Dendritic cell treated with granulocyte-macrophage colony-stimulating factor and Interleukin-4, amounts not matched to agents 40 ng/mL and 50 ng/mL, for 4 days (primary cell): ENCODE measurements at regions of chr10 and their contacts with region 1.

Region 1: DNA sequence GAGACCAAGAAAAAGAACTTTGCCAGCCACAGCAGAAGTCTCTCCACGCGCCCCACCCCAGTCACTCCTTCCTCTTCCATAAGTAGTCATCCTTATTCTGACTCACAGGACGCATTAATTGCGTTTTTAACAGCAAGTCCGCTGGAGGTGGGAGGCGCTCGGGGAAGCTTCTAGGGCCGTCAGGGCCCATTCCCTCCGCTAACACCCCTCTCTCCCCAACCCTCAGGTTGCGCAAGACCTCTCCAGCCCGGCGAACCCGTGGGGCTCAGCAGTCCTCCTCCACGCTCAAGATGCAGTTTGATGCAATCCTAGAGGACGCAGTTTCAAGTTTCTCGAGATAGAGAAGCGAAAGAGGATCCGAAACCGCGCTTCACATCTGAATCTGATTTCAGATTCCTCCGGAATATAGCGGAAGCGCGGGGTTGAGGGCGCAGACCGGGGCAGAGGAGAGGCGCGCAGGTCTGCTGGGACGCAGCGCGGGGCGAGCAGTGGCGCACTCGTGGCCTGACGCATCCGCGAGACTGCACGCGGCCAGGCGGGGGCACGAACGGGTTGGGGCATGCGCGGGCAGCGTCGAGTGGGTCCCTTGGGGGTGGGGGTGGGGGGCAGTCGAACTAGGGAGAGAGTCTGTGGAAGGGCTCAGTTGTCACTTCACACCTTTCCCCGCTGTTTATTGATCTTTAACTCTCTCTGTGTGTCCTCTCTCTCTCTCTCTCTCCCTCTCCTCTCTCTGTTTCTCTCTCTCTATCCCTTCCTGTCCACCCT is 37.8 kb upstream of the PSAP start:
- H3K4me3 Mint-ChIP-seq: peak overlapping the region; percentile 70
- H3K27ac Mint-ChIP-seq: peak overlapping the region; percentile 95
- H3K4me1 Mint-ChIP-seq: peaks cover 73% of the 10 kb centered on the region
- H3K27me3 Mint-ChIP-seq: no peaks in the 10 kb centered on the region

Region 2: GRCh38 chr10:70931168-70931815 is 957.5 kb before region 1 on chr10:
- intact Hi-C with region 1: no loop called
- H3K4me3 Mint-ChIP-seq: no peak overlapping the region
- H3K27ac Mint-ChIP-seq: no peak overlapping the region
- H3K4me1 Mint-ChIP-seq: peaks cover 8% of the 10 kb centered on the region
- H3K27me3 Mint-ChIP-seq: peaks cover 6% of the 10 kb centered on the region

Region 3: GRCh38 chr10:71850637-71851464 is 38.0 kb before region 1 on chr10 and contains the start of gene PSAP:
- intact Hi-C with region 1: loop called (anchors 2 kb)
- H3K4me3 Mint-ChIP-seq: peak within 1 kb of the TSS; percentile 98
- H3K27ac Mint-ChIP-seq: peak within 1 kb of the TSS; percentile 92
- H3K4me1 Mint-ChIP-seq: peaks cover 75% of the 10 kb centered on the region
- H3K27me3 Mint-ChIP-seq: no peaks in the 10 kb centered on the region

Region 4: GRCh38 chr10:72126184-72126871 is 237.5 kb after region 1 on chr10:
- intact Hi-C with region 1: no loop called
- H3K4me3 Mint-ChIP-seq: no peak overlapping the region
- H3K27ac Mint-ChIP-seq: no peak overlapping the region
- H3K4me1 Mint-ChIP-seq: peaks cover 14% of the 10 kb centered on the region
- H3K27me3 Mint-ChIP-seq: peaks cover 11% of the 10 kb centered on the region